ENCODE measurements at regions of chr22 and their contacts with region 1.

Region 1: DNA sequence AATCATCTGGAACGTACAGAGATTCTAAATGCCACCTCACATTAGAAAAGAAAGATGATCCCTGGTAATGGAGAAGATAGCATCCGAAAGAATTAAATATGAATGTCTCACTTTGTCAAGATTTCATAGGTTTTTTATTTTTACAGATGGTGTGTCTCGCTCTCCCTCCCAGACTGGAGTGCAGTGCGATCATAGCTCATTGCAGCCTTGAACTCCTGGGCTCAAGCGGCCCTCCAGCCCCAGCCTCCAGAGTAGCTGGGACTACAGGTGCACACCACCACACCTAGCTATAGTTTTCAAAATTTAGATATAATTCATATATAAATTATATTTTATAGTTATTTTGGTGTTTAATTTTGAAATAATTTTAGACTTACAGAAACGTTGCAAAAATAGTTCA is 16.7 kb upstream of the SMTN start:
- DNase-seq: no peak
- ATAC-seq: no peak
- H3K4me3 ChIP-seq: no peak overlapping the region
- H3K27ac ChIP-seq: no peak overlapping the region
- H3K4me1 ChIP-seq: no peaks in the 10 kb centered on the region
- H3K27me3 ChIP-seq: no peaks in the 10 kb centered on the region
- CTCF ChIP-seq: no peak

Region 2: GRCh38 chr22:31046539-31047226 is 17.7 kb before region 1 on chr22:
- CTCF ChIA-PET with region 1: no interaction called
- POLR2A ChIA-PET with region 1: interaction called, 11 read pairs
- in situ Hi-C with region 1: no loop called
- intact Hi-C with region 1: no loop called
- DNase-seq: no peak
- ATAC-seq: no peak
- H3K4me3 ChIP-seq: no peak overlapping the region
- H3K27ac ChIP-seq: no peak overlapping the region
- H3K4me1 ChIP-seq: no peaks in the 10 kb centered on the region
- H3K27me3 ChIP-seq: no peaks in the 10 kb centered on the region
- CTCF ChIP-seq: no peak

Region 3: DNA sequence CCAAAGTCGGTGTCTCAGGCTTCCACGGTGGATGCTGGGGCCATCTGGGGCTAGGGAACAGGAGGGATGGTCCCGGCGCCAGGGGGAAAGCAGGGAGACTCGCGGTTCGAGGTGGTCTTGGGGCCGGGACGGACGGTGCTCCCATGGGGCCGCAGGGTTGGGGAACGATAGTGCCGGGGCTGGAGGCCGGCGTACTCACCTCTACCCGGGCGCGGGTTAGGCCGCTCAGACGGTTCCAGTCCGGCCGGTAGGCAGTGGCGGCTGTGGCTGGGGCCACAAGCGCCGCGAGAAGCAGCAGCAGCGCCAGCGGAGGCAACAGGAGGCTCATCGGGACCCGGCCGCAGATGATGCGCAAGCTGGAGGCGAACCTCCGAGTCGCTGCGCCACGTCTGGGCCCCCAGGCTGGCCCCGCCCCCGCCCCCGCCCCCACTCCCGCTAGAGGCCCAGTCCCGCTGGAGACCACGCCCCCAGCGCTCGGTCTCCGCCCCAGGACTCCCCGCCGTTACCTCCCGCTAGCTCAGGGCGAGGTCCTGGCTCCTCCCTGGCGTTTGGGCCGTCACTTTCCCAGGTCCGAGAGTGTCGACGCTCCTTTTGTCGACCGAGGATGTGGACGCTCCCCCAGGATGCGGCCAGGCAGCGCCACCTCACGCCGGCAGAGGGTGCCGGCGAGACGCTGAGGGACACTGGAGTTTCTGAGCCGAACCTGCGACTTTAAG is 43.0 kb after region 1 on chr22 and contains the start of gene SELENOM:
- CTCF ChIA-PET with region 1: no interaction called
- POLR2A ChIA-PET with region 1: no interaction called
- in situ Hi-C with region 1: no loop called
- intact Hi-C with region 1: no loop called
- DNase-seq: peak; percentile 85
- ATAC-seq: peak; percentile 98
- H3K4me3 ChIP-seq: peak within 1 kb of the TSS; percentile 70 to 81
- H3K27ac ChIP-seq: peak within 1 kb of the TSS; percentile 75
- H3K4me1 ChIP-seq: no peaks in the 10 kb centered on the region; the same call in 1 of the 2 replicates
- H3K27me3 ChIP-seq: no peaks in the 10 kb centered on the region
- CTCF ChIP-seq: peak; percentile 91
- total RNA-seq, gene SELENOM: 84.4 TPM